ENCODE measurements at regions of chr1 and their contacts with region 1.

Region 1: DNA sequence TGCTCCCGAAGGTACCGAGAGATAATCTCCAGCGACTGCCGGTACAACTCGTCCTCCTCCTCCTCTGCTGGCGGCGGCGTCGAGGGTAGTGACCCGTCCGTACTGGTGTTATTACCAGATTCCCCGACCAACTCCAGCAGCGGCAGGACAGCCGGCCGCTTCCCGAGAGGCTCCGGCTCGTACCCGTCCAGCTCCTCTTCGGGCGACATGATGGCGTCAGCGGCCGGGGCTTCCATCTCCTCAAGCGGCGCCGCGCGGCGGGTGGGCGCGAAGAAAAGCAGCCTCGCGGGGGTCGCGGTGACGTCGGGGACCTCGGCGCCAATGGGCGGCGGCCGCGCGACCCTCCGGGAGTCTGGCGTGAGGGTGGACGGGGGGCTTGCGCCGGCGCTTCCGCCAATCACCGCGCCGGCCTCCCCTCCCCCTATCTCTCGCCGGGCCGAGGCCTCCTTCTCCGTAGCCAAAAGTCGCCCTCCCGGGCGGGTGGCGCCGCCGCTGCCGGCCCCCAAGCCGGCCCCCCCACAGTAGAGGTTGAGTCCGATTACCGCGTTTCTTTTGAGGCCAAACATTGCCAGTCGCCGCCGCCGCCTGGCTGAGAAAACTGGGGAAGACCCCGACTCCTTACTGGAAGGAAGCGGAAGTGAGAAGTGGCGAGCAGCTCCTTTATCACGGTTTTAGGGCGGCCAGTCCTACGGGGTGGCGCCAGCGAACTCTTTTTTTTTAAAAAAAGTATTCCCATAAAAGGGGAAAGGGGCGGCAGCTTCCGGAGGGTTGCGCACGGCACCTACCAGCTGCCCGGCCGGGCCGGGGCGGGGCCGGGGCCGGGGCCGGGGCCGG is at the start of gene MCL1:
- DNase-seq: peak; percentile 96
- H3K4me3 ChIP-seq: peak within 1 kb of the TSS; percentile 95
- H3K4me3 Mint-ChIP-seq: peak within 1 kb of the TSS; percentile 100
- H3K27ac Mint-ChIP-seq: peak within 1 kb of the TSS; percentile 98
- H3K4me1 ChIP-seq: peaks cover 33% of the 10 kb centered on the region
- H3K4me1 Mint-ChIP-seq: peaks cover 34% of the 10 kb centered on the region
- H3K27me3 ChIP-seq: no peaks in the 10 kb centered on the region
- H3K27me3 Mint-ChIP-seq: no peaks in the 10 kb centered on the region
- CTCF ChIP-seq: peak in 1 of 2 experiments; percentile 10
- total RNA-seq, gene MCL1: 130 and 134 TPM in 2 replicates

Region 2: GRCh38 chr1:150456146-150456647 is 123.0 kb before region 1 on chr1:
- CTCF ChIA-PET with region 1: no interaction called
- POLR2A ChIA-PET with region 1: no interaction called
- intact Hi-C with region 1: no loop called
- DNase-seq: no peak
- H3K4me3 ChIP-seq: no peak overlapping the region
- H3K4me3 Mint-ChIP-seq: no peak overlapping the region
- H3K27ac Mint-ChIP-seq: no peak overlapping the region
- H3K4me1 ChIP-seq: no peaks in the 10 kb centered on the region
- H3K4me1 Mint-ChIP-seq: no peaks in the 10 kb centered on the region
- H3K27me3 ChIP-seq: no peaks in the 10 kb centered on the region
- H3K27me3 Mint-ChIP-seq: no peaks in the 10 kb centered on the region
- CTCF ChIP-seq: no peak

Region 3: DNA sequence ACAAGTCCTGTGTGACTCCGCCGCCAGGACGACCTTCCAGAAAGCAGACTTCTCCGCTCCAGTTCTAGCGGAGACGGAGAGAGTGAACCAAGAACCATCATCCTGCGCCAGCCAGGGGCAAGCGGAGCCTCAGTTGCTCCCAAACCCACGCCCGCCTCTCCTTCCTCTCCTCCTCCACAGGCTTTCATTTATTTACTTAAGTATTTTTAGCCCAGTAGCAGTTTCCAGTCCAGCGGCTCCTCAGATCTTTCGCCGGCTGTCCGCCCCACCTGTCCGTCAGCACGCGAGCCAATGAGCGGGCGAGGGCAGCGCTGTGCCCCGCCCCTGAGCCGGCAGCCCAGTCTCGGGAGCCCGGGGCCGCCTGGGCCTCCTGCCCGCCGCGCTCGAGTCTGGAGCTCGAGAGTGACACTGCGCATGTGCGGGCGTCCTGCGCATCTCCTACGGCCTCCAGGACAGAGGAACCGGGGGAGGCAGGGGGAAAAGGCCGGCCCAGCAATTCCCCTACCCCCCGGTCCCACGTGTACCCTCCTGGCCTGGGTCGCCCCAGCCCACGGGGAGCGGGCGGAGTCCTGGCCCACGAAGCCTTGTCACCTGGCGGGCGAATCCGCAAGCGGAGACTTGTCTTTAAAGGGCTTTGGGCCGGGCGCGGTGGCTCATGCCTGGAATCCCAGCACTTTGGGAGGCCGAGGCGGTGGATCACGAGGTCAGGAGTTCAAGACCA is 63.7 kb before region 1 on chr1 and contains the start of gene FALEC:
- CTCF ChIA-PET with region 1: interaction called, 3 read pairs
- POLR2A ChIA-PET with region 1: interaction called, 12 read pairs
- intact Hi-C with region 1: no loop called
- DNase-seq: peak; percentile 97 to 98
- H3K4me3 ChIP-seq: peak within 1 kb of the TSS; percentile 77
- H3K4me3 Mint-ChIP-seq: peak within 1 kb of the TSS; percentile 88
- H3K27ac Mint-ChIP-seq: peak within 1 kb of the TSS; percentile 86
- H3K4me1 ChIP-seq: peaks cover 7% of the 10 kb centered on the region; the same call in 1 of the 2 replicates
- H3K4me1 Mint-ChIP-seq: peaks cover 9% of the 10 kb centered on the region
- H3K27me3 ChIP-seq: no peaks in the 10 kb centered on the region
- H3K27me3 Mint-ChIP-seq: no peaks in the 10 kb centered on the region
- CTCF ChIP-seq: no peak
- total RNA-seq, gene FALEC: 0.59 and 0.63 TPM in 2 replicates

Region 4: GRCh38 chr1:150567717-150568593 is 11.2 kb before region 1 on chr1:
- CTCF ChIA-PET with region 1: interaction called, 51 read pairs
- POLR2A ChIA-PET with region 1: interaction called, 152 read pairs
- intact Hi-C with region 1: no loop called
- DNase-seq: peak; percentile 94 to 95
- H3K4me3 ChIP-seq: peak overlapping the region; percentile 18
- H3K4me3 Mint-ChIP-seq: peak overlapping the region; percentile 60
- H3K27ac Mint-ChIP-seq: peak overlapping the region; percentile 82
- H3K4me1 ChIP-seq: peaks cover 56% of the 10 kb centered on the region
- H3K4me1 Mint-ChIP-seq: peaks cover 43% of the 10 kb centered on the region
- H3K27me3 ChIP-seq: no peaks in the 10 kb centered on the region
- H3K27me3 Mint-ChIP-seq: no peaks in the 10 kb centered on the region
- CTCF ChIP-seq: no peak

Region 5: GRCh38 chr1:150615346-150616201 is 36.4 kb after region 1 on chr1:
- CTCF ChIA-PET with region 1: no interaction called
- POLR2A ChIA-PET with region 1: interaction called, 17 read pairs
- intact Hi-C with region 1: loop called (anchors 2 kb)
- DNase-seq: no peak
- H3K4me3 ChIP-seq: no peak overlapping the region
- H3K4me3 Mint-ChIP-seq: no peak overlapping the region
- H3K27ac Mint-ChIP-seq: peak overlapping the region; percentile 30
- H3K4me1 ChIP-seq: peaks cover 23% of the 10 kb centered on the region
- H3K4me1 Mint-ChIP-seq: peaks cover 23% of the 10 kb centered on the region
- H3K27me3 ChIP-seq: no peaks in the 10 kb centered on the region
- H3K27me3 Mint-ChIP-seq: no peaks in the 10 kb centered on the region
- CTCF ChIP-seq: no peak

Region 6: DNA sequence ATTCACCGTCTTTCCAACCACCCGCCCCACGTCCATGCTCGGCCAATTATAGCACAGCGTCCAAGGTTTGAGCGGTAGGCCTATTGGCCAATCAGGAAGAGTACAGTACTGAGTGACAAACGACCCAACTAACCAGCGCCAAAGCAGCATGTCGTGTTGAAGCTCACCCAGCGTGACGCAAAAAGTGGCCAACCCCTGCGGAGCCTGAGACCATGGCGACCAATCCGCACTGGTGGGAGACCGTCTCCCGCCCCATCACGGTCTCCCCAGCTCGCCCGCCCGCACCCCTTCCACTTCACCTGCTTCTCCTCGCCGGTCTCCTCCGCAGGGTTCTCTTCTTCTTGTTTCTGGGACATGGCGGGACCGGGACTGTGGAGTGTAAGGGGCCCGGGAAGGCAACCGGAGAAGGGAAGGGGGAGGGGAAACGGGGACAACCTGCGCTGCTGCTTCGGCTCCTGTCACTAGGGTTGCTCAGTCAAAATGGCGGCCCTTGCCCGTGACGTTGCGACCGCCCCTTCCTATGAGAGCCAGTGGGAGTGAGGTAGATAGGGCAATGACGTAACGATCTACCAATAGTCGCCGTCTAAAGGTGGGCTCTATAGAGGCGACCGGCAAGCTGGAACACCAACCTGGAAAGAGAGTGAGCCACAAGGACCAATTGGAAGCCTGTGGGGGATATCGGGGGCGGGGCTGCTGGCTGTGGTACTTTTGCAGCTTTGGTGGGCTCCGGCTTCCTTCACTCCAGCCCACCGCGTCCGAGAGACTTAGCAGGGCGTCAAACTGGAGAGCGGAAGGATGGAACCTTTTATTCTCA is 50.1 kb after region 1 on chr1 and contains the start of gene ENSA:
- CTCF ChIA-PET with region 1: no interaction called
- POLR2A ChIA-PET with region 1: interaction called, 61 read pairs
- intact Hi-C with region 1: loop called (anchors 2 kb)
- DNase-seq: peak; percentile 97 to 99
- H3K4me3 ChIP-seq: peak within 1 kb of the TSS; percentile 56
- H3K4me3 Mint-ChIP-seq: no peak within 1 kb of the TSS
- H3K27ac Mint-ChIP-seq: no peak within 1 kb of the TSS
- H3K4me1 ChIP-seq: peaks cover 6% of the 10 kb centered on the region
- H3K4me1 Mint-ChIP-seq: peaks cover 5% of the 10 kb centered on the region
- H3K27me3 ChIP-seq: no peaks in the 10 kb centered on the region
- H3K27me3 Mint-ChIP-seq: no peaks in the 10 kb centered on the region
- CTCF ChIP-seq: no peak
- total RNA-seq, gene ENSA: 178 TPM in 2 replicates

Measured in Caco-2 (cell line).